Endothelial cell of umbilical vein (primary cell): ENCODE measurements at regions of chr19 and their contacts with region 1.

Region 1: DNA sequence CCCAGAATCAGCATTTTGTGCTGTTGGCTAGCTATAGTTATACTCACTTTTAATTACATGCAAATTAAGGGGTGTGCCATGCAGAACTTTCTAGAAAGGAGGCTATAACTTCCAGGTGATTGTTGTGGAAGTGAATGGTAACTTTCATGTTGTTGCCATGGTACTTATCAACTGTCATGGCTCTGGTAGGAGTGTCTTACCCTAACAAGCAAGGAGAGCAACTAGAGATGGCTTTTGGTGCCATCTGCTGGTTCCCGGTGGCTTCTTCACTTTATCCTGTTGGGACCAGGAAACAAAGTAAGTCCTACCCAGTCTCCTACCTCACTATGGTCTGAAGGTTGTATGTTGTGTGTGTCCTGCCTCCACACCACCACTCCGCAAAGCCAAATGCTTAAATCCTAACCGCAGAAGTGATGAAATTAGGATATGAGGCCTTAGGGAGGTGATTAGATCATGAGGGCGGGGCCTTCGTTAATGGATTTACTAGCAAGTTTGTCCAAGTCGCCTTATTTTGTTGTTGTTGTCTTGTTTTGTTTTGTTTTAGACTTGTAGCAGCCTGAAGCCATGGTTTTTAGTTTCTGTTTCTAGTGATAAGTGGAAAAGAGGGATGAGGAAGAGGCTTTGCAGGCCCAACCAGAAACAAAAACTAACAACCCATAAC is 22.6 kb downstream of the FBXL12 start:
- DNase-seq: peak; percentile 94
- H3K4me3 ChIP-seq: no peak overlapping the region
- H3K27ac ChIP-seq: no peak overlapping the region
- H3K4me1 ChIP-seq: no peaks in the 10 kb centered on the region
- H3K27me3 ChIP-seq: no peaks in the 10 kb centered on the region
- CTCF ChIP-seq: peak; percentile 79 to 83
- POLR2A ChIP-seq: no peak

Region 2: GRCh38 chr19:9205501-9206113 is 590.6 kb before region 1 on chr19:
- CTCF ChIA-PET with region 1: interaction called, 11 read pairs
- POLR2A ChIA-PET with region 1: no interaction called
- dilution Hi-C with region 1: no loop called
- intact Hi-C with region 1: loop called (anchors 1 kb)
- DNase-seq: peak; percentile 58
- H3K4me3 ChIP-seq: no peak overlapping the region
- H3K27ac ChIP-seq: no peak overlapping the region
- H3K4me1 ChIP-seq: no peaks in the 10 kb centered on the region
- H3K27me3 ChIP-seq: no peaks in the 10 kb centered on the region
- CTCF ChIP-seq: peak; percentile 74 to 87
- POLR2A ChIP-seq: no peak

Region 3: DNA sequence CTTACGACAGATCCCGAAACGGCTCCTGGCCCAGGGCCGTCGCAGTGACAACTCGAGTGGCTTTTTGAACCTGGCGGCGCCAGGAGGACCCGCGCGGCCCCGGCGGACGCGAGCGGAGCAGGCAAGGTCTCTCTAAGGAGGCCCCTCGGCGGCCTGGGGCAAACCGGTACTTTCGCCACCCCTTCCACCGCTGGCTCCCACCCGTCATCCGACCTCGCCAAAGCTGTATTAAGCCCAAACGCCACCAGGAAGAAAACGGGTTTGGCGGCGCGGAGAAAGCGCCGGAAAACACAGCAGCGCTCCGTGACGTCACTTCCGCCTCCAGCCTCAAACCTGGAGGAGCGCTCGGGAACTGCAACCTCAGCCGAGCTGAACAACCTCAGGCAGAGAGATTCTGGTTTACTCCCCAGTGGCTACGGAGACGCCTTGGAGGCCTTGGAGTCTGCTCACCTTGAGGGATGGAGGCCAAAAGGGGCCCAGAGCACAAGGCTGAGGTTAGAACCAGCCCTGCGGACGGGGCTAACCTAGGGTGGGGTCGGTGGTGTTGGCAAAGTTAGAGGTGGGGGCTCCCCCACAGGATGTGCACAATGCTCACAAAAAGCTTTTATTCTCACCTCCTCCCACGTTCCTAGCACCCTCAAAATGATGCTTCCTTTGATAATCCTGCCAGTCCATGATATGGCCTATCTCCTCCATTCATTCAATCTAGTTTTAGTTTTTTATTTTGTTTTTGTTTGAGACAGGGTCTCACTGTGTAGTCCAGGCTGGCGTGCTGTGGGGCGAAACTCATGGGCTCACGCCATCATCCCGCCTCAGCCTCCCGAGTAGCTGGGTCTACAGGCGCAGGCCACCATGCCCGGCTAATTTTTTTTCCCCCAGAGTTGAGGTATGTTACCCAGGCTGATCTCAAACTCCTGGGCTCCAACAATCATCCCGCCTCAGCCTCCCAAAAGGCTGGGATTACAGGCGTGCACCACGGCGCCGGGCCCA is 360.7 kb before region 1 on chr19 and contains the start of gene ZNF266:
- CTCF ChIA-PET with region 1: no interaction called
- POLR2A ChIA-PET with region 1: no interaction called
- dilution Hi-C with region 1: no loop called
- intact Hi-C with region 1: loop called (anchors 2 kb)
- DNase-seq: peak; percentile 90
- H3K4me3 ChIP-seq: peak within 1 kb of the TSS; percentile 43 to 90 (median 82)
- H3K27ac ChIP-seq: peak within 1 kb of the TSS; percentile 57
- H3K4me1 ChIP-seq: peaks cover 13% of the 10 kb centered on the region
- H3K27me3 ChIP-seq: no peaks in the 10 kb centered on the region
- CTCF ChIP-seq: peak; percentile 57 to 81
- POLR2A ChIP-seq: no peak
- total RNA-seq, gene ZNF266: 16.7 and 17.0 TPM in 2 replicates

Region 4: GRCh38 chr19:9621156-9622037 is 174.8 kb before region 1 on chr19 and contains the start of gene ZNF561:
- CTCF ChIA-PET with region 1: interaction called, 34 read pairs
- POLR2A ChIA-PET with region 1: no interaction called
- dilution Hi-C with region 1: loop called (anchors 10 kb)
- intact Hi-C with region 1: loop called (anchors 1 kb)
- DNase-seq: peak; percentile 90
- H3K4me3 ChIP-seq: peak within 1 kb of the TSS; percentile 27 to 76 (median 57)
- H3K27ac ChIP-seq: peak within 1 kb of the TSS; percentile 93
- H3K4me1 ChIP-seq: peaks cover 10% of the 10 kb centered on the region
- H3K27me3 ChIP-seq: no peaks in the 10 kb centered on the region
- CTCF ChIP-seq: no peak
- POLR2A ChIP-seq: peak; percentile 83
- total RNA-seq, gene ZNF561: 39.4 and 44.9 TPM in 2 replicates

Region 5: GRCh38 chr19:9768175-9769112 is 27.8 kb before region 1 on chr19 and contains the start of gene ZNF846:
- CTCF ChIA-PET with region 1: interaction called, 4 read pairs
- POLR2A ChIA-PET with region 1: no interaction called
- dilution Hi-C with region 1: no loop called
- intact Hi-C with region 1: loop called (anchors 1 kb)
- DNase-seq: peak; percentile 93
- H3K4me3 ChIP-seq: peak within 1 kb of the TSS; percentile 42 to 85 (median 83)
- H3K27ac ChIP-seq: peak within 1 kb of the TSS; percentile 85
- H3K4me1 ChIP-seq: peaks cover 7% of the 10 kb centered on the region
- H3K27me3 ChIP-seq: no peaks in the 10 kb centered on the region
- CTCF ChIP-seq: no peak
- POLR2A ChIP-seq: peak; percentile 72
- total RNA-seq, gene ZNF846: 6.9 and 8.3 TPM in 2 replicates